Endothelial cell of umbilical vein (primary cell): ENCODE measurements at regions of chr2 and their contacts with region 1.

Region 1: GRCh38 chr2:205680067-205680466 is 2.2 kb upstream of the NRP2 start:
- DNase-seq: peak; percentile 79
- H3K4me3 ChIP-seq: no peak overlapping the region
- H3K27ac ChIP-seq: no peak overlapping the region
- H3K4me1 ChIP-seq: peaks cover 27% of the 10 kb centered on the region
- H3K27me3 ChIP-seq: no peaks in the 10 kb centered on the region
- CTCF ChIP-seq: peak; percentile 67 to 72
- POLR2A ChIP-seq: no peak

Region 2: GRCh38 chr2:204108330-204108751 is 1571.7 kb before region 1 on chr2:
- CTCF ChIA-PET with region 1: interaction called, 17 read pairs
- POLR2A ChIA-PET with region 1: interaction called, 11 read pairs
- dilution Hi-C with region 1: no loop called
- intact Hi-C with region 1: loop called (anchors 1 kb)
- DNase-seq: peak; percentile 73
- H3K4me3 ChIP-seq: no peak overlapping the region
- H3K27ac ChIP-seq: peak overlapping the region; percentile 74
- H3K4me1 ChIP-seq: peaks cover 47% of the 10 kb centered on the region
- H3K27me3 ChIP-seq: no peaks in the 10 kb centered on the region
- CTCF ChIP-seq: peak; percentile 25 to 59
- POLR2A ChIP-seq: no peak

Region 3: GRCh38 chr2:204325468-204325867 is 1354.6 kb before region 1 on chr2:
- CTCF ChIA-PET with region 1: interaction called, 20 read pairs
- POLR2A ChIA-PET with region 1: interaction called, 4 read pairs
- dilution Hi-C with region 1: no loop called
- intact Hi-C with region 1: loop called (anchors 1 kb)
- DNase-seq: peak; percentile 89
- H3K4me3 ChIP-seq: no peak overlapping the region
- H3K27ac ChIP-seq: no peak overlapping the region
- H3K4me1 ChIP-seq: peaks cover 19% of the 10 kb centered on the region
- H3K27me3 ChIP-seq: no peaks in the 10 kb centered on the region
- CTCF ChIP-seq: peak; percentile 61 to 68
- POLR2A ChIP-seq: no peak

Region 4: DNA sequence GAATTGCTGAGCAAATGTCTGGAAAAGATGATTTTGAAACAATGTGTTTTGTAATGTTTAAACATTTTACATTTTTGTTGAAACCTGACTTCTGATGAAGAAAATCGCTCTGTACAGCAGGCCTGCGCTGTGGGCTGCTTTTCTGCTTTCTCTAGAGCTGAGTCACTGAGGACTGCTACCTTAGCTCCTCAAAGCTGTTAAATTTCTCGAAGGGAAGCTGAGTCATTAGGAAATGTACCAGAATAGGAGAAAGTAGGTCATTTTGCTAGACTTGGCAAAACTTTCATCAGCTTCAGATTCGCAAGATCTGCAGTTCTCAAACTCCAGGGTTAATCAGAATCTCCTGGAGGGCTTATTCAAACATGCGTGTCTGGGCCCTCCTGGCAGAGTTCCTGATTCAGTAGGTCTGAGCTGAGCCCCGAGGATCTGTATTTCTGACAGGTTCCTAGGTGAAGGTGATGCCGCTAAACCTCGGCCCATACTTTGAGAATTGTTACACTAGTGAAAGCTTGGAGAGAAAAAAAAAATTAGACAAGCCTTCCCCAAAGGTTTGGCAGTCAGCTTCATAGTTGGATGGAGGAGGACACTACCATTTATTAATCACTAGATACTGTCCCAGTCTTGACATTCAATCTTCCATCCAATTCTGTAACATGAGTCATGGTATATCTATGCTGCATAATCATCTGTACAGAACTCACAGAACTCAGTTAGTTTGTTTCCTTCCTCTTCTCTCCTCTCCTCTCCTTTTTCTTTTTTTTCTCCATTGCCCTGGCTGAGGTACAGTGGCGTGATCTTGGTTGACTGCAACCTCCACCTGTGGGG is 837.2 kb before region 1 on chr2:
- CTCF ChIA-PET with region 1: interaction called, 10 read pairs
- POLR2A ChIA-PET with region 1: interaction called, 5 read pairs
- dilution Hi-C with region 1: no loop called
- intact Hi-C with region 1: no loop called
- DNase-seq: peak; percentile 92
- H3K4me3 ChIP-seq: peak overlapping the region in 1 of 3 experiments; percentile 15
- H3K27ac ChIP-seq: peak overlapping the region; percentile 84
- H3K4me1 ChIP-seq: peaks cover 25% of the 10 kb centered on the region
- H3K27me3 ChIP-seq: no peaks in the 10 kb centered on the region
- CTCF ChIP-seq: no peak
- POLR2A ChIP-seq: no peak

Region 5: GRCh38 chr2:205323929-205324328 is 356.1 kb before region 1 on chr2:
- CTCF ChIA-PET with region 1: interaction called, 33 read pairs
- POLR2A ChIA-PET with region 1: no interaction called
- dilution Hi-C with region 1: no loop called
- intact Hi-C with region 1: loop called (anchors 2 kb)
- DNase-seq: no peak
- H3K4me3 ChIP-seq: no peak overlapping the region
- H3K27ac ChIP-seq: no peak overlapping the region
- H3K4me1 ChIP-seq: no peaks in the 10 kb centered on the region
- H3K27me3 ChIP-seq: no peaks in the 10 kb centered on the region
- CTCF ChIP-seq: no peak
- POLR2A ChIP-seq: no peak

Region 6: DNA sequence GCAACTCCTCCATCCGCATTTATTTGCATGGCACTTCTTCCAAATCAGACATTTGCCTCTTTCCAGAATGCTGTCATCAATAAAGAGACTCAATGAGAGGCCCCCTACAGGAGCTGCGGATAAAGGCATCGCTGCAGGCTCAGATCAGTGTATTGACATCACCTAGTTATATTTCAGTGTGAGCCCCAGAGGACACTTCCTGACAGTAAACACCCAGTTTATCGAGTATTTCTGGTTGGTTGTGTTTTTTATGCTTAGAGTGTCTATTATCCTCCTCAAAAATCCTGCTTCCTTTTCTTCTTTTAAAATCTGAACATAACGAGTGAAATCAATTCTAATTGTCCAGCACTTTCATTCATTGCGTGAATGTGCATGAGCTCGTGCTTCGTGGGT is 41.0 kb after region 1 on chr2:
- CTCF ChIA-PET with region 1: interaction called, 29 read pairs
- POLR2A ChIA-PET with region 1: interaction called, 4 read pairs
- dilution Hi-C with region 1: no loop called
- intact Hi-C with region 1: loop called (anchors 1 kb)
- DNase-seq: no peak
- H3K4me3 ChIP-seq: no peak overlapping the region
- H3K27ac ChIP-seq: no peak overlapping the region
- H3K4me1 ChIP-seq: no peaks in the 10 kb centered on the region
- H3K27me3 ChIP-seq: no peaks in the 10 kb centered on the region
- CTCF ChIP-seq: peak; percentile 25 to 47
- POLR2A ChIP-seq: no peak

Region 7: DNA sequence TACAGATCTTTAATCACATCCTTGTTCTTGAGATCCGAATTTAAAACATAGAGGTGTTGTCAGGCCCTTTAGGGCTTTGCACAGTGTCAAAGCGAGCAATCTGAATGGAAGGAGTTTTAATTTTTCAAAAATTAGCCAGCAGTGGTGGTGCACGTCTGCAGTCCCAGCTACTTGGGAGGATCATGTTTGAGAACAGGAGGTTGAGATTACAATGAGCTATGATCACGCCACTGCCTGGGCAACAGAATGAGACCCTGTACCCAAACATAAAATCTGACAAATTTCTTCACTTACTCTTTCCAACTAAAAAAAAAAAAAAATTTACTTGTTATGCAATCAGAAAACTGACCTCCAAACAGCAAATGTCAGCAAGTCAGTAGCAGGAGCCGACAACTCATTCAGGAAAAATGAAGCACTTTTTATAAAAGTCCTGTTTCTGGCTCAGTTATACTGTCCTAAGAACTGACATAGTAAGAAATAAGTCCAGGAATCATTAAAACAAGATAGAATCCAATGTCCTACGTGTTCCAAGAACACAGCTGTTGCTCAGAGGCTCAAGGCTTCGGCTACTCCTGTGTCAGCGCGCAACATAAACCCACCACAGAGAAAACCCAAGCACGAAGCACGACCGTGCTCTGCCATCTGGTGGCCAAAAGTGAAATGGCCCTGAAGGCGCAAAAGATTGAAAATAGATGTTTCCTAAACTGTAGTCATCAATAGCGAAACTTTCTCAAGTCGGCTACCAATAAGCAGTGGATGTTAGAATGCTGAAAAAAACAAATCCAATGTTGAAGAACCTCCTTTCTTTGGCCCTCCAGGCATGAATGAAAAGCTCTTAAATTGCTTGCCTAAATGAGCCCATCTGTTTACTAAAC is 267.8 kb after region 1 on chr2:
- CTCF ChIA-PET with region 1: interaction called, 3 read pairs
- POLR2A ChIA-PET with region 1: no interaction called
- dilution Hi-C with region 1: no loop called
- intact Hi-C with region 1: loop called (anchors 1 kb)
- DNase-seq: peak; percentile 74
- H3K4me3 ChIP-seq: no peak overlapping the region
- H3K27ac ChIP-seq: no peak overlapping the region
- H3K4me1 ChIP-seq: peaks cover 17% of the 10 kb centered on the region
- H3K27me3 ChIP-seq: peaks cover 3 to 7% of the 10 kb centered on the region in 2 experiments
- CTCF ChIP-seq: peak; percentile 84 to 94
- POLR2A ChIP-seq: no peak